Natural killer cell (primary cell): ENCODE measurements at regions of chr5 and their contacts with region 1.

Region 1: GRCh38 chr5:42994246-42995151 is 45.6 kb downstream of the ANXA2R start:
- DNase-seq: peak; percentile 82 to 94
- ATAC-seq: peak; percentile 63 to 81 (median 64)
- H3K4me3 ChIP-seq: peak overlapping the region; percentile 69
- H3K4me3 Mint-ChIP-seq: peak overlapping the region; percentile 98
- H3K27ac ChIP-seq: peak overlapping the region; percentile 95
- H3K27ac Mint-ChIP-seq: peak overlapping the region; percentile 95 to 99
- H3K4me1 ChIP-seq: peaks cover 40% of the 10 kb centered on the region
- H3K4me1 Mint-ChIP-seq: peaks cover 44 to 46% of the 10 kb centered on the region in 2 donors
- H3K27me3 ChIP-seq: no peaks in the 10 kb centered on the region
- H3K27me3 Mint-ChIP-seq: no peaks in the 10 kb centered on the region
- CTCF ChIP-seq: peak; percentile 85

Region 2: DNA sequence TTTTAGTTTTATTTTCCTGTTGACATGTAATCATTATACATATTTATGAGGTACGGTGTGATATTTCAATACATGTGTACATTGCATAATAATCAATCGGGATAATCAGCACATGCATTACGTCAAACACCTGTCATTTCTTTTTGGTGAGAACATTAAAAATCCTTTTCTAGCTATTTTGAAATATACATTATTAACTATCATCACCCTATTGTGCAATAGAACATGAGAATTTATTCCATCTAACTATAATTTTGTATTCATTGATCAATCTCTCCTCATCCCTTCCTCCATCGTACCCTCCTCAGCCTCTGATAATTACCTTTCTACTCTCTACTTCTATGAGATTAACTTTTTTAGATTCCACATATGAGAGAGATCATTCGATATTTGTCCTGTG is 742.2 kb before region 1 on chr5:
- intact Hi-C with region 1: no loop called
- DNase-seq: no peak
- ATAC-seq: no peak
- H3K4me3 ChIP-seq: no peak overlapping the region
- H3K4me3 Mint-ChIP-seq: no peak overlapping the region
- H3K27ac ChIP-seq: no peak overlapping the region
- H3K27ac Mint-ChIP-seq: no peak overlapping the region
- H3K4me1 ChIP-seq: no peaks in the 10 kb centered on the region
- H3K4me1 Mint-ChIP-seq: no peaks in the 10 kb centered on the region
- H3K27me3 ChIP-seq: no peaks in the 10 kb centered on the region
- H3K27me3 Mint-ChIP-seq: no peaks in the 10 kb centered on the region
- CTCF ChIP-seq: no peak

Region 3: DNA sequence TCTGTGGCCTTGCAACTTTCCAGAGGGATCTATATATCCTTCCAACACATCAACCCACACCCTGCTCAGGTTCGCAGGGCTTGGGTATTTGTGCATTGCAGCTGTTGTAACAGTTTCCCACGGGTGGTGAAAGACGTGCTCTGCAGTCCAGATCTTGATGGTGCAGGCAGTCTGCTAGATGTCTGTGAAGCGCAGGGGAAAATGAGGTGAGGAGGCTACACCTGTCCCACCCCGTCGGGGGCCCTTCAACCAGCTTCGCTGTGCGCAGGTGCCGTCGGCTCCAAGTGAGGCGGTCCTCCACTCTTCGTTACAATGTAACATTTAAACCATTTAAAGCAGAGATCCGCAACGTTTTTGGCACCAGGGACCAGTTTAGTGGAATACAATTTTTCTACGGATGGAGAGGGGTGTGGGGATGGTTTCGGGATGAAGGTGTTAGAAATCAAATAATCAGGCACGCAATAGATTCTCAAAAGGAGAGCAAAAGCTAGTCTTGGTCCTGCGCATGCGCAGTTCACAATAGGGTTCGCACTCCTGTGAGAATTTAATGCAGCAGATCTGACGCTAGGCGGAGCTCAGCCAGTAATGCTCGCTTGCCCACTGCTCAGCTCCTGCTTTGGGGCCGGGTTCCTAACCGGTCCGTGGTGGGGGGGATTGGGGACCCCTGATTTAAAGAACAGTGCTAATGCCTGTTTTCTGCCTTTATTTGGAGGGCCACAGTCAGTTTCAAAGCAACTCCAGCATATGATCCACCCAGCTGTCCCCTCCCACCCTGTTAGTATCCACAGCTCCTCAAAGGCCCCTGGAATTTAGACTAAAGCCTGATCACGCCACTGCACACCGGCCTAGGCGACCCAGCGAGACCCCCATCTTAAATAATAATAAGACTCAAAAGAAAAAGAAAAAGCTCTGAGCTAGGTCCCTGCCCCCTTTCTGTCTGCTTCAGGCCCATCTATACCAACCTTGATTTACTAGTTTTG is 85.7 kb before region 1 on chr5:
- intact Hi-C with region 1: loop called (anchors 1 kb)
- DNase-seq: peak; percentile 83 to 98
- ATAC-seq: peak; percentile 84 to 95 (median 93)
- H3K4me3 ChIP-seq: peak overlapping the region; percentile 67
- H3K4me3 Mint-ChIP-seq: peak overlapping the region; percentile 96
- H3K27ac ChIP-seq: peak overlapping the region; percentile 41
- H3K27ac Mint-ChIP-seq: peak overlapping the region; percentile 86 to 90
- H3K4me1 ChIP-seq: peaks cover 8% of the 10 kb centered on the region
- H3K4me1 Mint-ChIP-seq: peaks cover 8 to 14% of the 10 kb centered on the region in 2 donors
- H3K27me3 ChIP-seq: no peaks in the 10 kb centered on the region
- H3K27me3 Mint-ChIP-seq: peaks cover 15 to 26% of the 10 kb centered on the region in 2 donors
- CTCF ChIP-seq: peak; percentile 81

Region 4: DNA sequence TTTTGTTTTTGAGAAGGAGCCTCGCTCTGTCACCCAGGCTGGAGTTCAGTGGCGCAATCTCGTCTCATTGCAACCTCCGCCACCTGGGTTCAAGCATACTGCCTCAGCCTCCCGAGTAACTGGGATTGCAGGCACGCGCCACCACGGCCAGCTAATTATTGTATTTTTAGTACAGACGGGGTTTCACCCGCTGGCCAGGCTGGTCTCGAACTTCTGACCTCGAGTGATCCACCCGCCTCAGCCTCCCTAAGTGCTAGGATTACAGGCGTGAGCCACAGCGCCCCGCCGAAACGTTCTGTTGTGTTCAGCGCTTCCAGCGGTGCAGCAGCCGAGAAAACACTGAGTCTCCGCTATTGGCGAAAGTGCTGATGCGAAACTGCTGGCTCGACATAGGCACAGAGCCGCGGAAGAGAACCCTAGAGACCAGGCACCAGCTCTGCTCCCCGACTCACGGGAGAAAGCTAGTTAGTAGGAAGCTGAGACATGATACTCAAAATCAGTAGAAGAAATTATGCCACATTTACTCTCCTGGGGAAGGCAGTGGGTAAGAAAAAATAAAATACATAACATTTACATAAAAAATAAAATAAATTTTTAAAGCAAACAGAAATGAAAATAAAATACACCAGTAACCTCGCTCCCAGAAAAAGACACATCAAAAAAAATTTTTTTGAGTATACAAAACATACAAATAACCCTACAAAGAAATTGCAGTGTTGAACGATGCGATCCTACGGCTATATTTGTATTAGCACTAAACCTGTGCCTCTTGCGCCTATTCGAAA is 14.1 kb after region 1 on chr5:
- intact Hi-C with region 1: loop called (anchors 1 kb)
- DNase-seq: peak; percentile 82 to 97
- ATAC-seq: peak; percentile 61 to 79 (median 65)
- H3K4me3 ChIP-seq: peak overlapping the region; percentile 81
- H3K4me3 Mint-ChIP-seq: peak overlapping the region; percentile 89
- H3K27ac ChIP-seq: peak overlapping the region; percentile 88
- H3K27ac Mint-ChIP-seq: peak overlapping the region; percentile 99 to 100
- H3K4me1 ChIP-seq: peaks cover 36% of the 10 kb centered on the region
- H3K4me1 Mint-ChIP-seq: peaks cover 27 to 49% of the 10 kb centered on the region in 2 donors
- H3K27me3 ChIP-seq: no peaks in the 10 kb centered on the region
- H3K27me3 Mint-ChIP-seq: no peaks in the 10 kb centered on the region
- CTCF ChIP-seq: no peak

Region 5: DNA sequence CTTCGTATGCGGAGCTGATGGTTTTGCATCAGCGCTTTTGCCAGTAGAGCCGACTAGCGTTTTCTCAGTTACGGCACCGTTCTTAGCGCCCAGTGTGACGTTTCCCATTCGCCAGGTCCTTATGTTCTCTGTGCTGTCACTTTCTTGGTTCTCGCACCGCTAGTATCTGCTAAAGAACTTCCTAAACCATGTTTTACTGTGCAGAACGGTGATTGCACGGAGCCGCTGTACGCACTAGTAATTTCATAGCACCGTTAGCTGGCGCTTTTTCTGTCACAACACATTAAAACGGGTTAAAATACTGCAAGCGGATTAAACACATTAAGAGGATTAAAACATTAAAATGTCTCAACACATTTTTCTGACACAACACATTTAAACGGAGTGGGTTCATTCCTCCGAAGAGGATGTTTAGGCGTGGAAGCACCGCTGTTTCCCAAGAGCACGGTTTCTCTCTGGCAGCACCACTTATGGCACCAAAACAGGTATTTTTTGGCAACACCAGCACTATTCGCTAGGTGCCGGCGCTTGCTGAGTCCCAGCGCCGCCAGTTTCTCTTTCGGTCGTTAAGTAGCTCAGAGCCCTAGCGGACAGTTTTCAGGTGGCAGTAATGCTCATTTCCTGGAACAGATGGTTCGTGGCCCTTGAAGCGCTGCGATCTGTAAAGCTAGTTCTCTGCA is 25.3 kb after region 1 on chr5:
- intact Hi-C with region 1: loop called (anchors 1 kb)
- DNase-seq: peak; percentile 73 to 96
- ATAC-seq: peak; percentile 64 to 83 (median 64)
- H3K4me3 ChIP-seq: peak overlapping the region; percentile 58
- H3K4me3 Mint-ChIP-seq: peak overlapping the region; percentile 91
- H3K27ac ChIP-seq: peak overlapping the region; percentile 93
- H3K27ac Mint-ChIP-seq: peak overlapping the region; percentile 99 to 100
- H3K4me1 ChIP-seq: peaks cover 22% of the 10 kb centered on the region
- H3K4me1 Mint-ChIP-seq: peaks cover 45 to 56% of the 10 kb centered on the region in 2 donors
- H3K27me3 ChIP-seq: no peaks in the 10 kb centered on the region
- H3K27me3 Mint-ChIP-seq: no peaks in the 10 kb centered on the region
- CTCF ChIP-seq: peak; percentile 61

Region 6: DNA sequence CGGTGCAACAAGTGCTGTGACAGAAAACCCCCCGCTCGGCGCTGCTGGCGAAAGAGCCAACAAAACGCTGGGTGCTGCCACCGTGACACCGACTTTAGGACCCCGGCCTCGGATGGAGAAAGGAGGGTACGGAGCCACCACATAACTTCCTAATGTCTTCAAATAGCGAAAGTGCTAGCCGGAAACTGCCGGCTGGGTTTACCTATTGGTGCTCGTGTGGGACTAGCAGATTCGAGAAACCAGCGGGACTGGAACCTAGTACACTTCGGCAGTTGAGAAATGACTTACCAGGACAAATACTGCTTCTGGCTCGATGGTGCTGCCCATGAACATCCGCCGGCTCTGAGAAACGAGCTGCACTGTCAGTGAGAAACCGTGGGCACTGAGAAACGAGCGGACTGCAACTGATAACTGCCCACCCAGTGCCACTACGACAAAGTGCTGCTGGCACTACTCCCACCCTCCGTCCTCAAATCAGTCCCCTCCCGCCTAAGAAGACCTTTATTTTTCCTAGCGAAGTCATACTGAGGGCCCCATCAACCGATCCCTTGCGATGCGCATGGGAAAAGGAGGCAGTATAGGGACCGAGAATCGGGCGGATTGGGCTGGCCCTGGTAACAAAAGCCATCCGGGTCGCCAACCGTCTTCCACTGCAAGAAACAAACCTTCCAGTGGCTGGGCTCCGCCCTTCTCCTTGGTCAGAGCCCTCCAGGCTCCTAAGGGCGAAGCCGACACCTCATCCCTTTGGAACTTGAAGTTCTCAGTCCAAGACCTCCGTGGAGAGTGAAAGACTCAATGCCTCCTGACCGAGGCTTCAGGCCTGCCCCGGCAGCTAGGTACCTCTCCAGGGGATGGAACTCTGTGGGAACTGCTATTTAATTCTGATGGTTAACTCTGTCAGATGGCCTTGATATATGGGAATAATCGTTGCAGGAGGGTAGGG is 72.6 kb after region 1 on chr5:
- intact Hi-C with region 1: loop called (anchors 1 kb)
- DNase-seq: peak; percentile 87 to 95
- ATAC-seq: peak; percentile 51 to 74 (median 57)
- H3K4me3 ChIP-seq: peak overlapping the region; percentile 72
- H3K4me3 Mint-ChIP-seq: peak overlapping the region; percentile 100
- H3K27ac ChIP-seq: peak overlapping the region; percentile 96
- H3K27ac Mint-ChIP-seq: peak overlapping the region; percentile 97 to 100
- H3K4me1 ChIP-seq: peaks cover 46% of the 10 kb centered on the region
- H3K4me1 Mint-ChIP-seq: peaks cover 41 to 51% of the 10 kb centered on the region in 2 donors
- H3K27me3 ChIP-seq: no peaks in the 10 kb centered on the region
- H3K27me3 Mint-ChIP-seq: no peaks in the 10 kb centered on the region
- CTCF ChIP-seq: no peak

Region 7: DNA sequence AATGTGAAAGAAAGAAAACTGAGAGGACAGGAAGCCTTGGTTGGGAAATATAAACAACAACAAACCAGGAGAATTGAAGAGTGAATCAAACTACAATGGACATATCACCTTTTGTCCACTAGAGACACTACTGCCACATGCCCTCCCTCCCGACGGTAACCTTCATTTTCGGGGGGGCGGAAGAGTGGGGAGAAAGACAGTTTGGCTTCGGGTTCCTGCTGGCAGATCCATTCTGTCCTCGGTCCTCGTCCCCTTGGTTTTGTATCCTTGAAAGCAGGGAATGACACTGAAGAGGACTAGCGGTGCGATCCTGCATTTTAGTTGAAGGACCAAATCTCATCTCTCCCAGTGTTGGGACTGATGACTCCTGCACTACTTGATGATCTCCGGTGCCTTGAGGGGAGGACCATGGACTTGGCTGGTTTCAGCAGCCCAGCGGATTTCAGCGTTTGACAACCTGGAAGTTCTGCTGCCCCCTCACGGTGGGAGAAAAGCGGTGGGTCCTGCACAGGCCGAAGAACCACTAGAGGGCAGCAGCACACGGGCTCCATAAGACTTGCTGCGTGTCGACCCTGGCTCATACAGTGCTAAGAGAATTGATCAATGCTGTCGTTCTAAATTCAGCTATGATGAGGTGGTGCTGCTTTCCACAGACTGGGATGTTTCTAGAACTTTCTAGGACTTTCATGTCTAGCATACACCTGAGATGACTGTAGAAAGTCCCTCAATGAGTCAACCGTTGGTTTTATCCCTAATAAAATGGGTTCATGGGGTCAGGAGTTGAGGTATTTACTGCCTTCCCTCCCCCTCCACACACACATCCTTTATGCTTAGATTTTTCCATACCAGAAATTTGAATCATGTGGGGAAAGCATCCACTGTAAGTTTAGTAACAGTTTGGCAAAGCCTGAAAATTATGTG is 111.1 kb after region 1 on chr5:
- intact Hi-C with region 1: loop called (anchors 1 kb)
- DNase-seq: peak; percentile 87 to 98
- ATAC-seq: peak; percentile 92 to 99 (median 94)
- H3K4me3 ChIP-seq: peak overlapping the region; percentile 35
- H3K4me3 Mint-ChIP-seq: peak overlapping the region; percentile 88
- H3K27ac ChIP-seq: peak overlapping the region; percentile 64
- H3K27ac Mint-ChIP-seq: peak overlapping the region; percentile 87 to 91
- H3K4me1 ChIP-seq: peaks cover 16% of the 10 kb centered on the region
- H3K4me1 Mint-ChIP-seq: peaks cover 12 to 25% of the 10 kb centered on the region in 2 donors
- H3K27me3 ChIP-seq: no peaks in the 10 kb centered on the region
- H3K27me3 Mint-ChIP-seq: no peaks in the 10 kb centered on the region
- CTCF ChIP-seq: peak; percentile 100

Region 8: DNA sequence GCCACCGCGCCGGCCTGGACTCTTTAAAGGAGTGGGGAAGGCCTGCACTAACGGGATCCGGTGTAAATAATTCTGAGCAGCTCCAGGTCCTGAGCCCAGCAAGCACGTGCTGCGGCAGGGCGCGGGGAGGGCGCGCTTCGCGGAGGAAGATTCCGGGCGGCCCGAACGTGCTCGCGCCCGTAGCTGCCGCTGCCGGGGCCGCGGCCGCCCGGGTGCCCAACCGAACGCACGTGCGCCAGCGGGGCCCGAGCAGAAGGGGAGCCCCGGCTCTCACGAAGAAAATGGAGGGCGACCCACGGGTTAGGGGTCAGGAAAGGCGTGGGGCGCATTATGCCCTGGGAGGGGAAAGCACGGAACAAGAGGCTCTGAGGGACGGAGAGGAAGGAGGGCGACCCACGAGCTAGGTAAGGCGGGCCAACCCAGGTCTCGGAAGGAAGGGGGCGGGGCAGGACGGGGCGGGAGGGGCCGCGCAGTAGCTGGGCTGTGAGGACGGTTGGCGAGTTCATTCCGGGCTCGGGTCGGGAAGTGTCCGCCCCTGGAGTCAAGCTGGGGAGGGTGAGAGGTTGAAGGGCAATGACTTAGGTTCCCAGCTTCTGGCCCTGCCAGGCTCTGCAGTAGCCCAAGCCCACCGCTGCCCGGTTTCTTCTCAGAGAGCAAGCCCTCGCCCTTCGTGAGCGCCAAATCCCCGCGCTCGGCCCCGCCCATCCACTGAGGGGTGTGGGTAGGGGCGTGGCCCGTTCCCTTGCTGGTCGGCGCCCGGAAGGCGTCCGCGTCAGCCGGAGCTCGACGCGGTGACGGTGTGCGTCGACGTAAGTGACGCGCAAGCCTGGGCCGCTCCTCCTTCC is 126.4 kb after region 1 on chr5 and contains the start of gene ZNF131:
- intact Hi-C with region 1: loop called (anchors 5 kb)
- DNase-seq: peak; percentile 99
- ATAC-seq: peak; percentile 87 to 96 (median 89)
- H3K4me3 ChIP-seq: peak within 1 kb of the TSS; percentile 59
- H3K4me3 Mint-ChIP-seq: peak within 1 kb of the TSS; percentile 87
- H3K27ac ChIP-seq: peak within 1 kb of the TSS; percentile 88
- H3K27ac Mint-ChIP-seq: peak within 1 kb of the TSS; percentile 88 to 99
- H3K4me1 ChIP-seq: peaks cover 13% of the 10 kb centered on the region
- H3K4me1 Mint-ChIP-seq: peaks cover 26 to 29% of the 10 kb centered on the region in 2 donors
- H3K27me3 ChIP-seq: no peaks in the 10 kb centered on the region
- H3K27me3 Mint-ChIP-seq: no peaks in the 10 kb centered on the region
- CTCF ChIP-seq: no peak
- total RNA-seq, gene ZNF131: 69.0 to 84.0 (median 83.5) TPM